ENCODE measurements at regions of chr13 and their contacts with region 1.

Region 1: GRCh38 chr13:33846444-33847062 is 28.6 kb downstream of the RFC3 start:
- DNase-seq: no peak
- H3K4me3 ChIP-seq: no peak overlapping the region
- H3K27ac ChIP-seq: no peak overlapping the region
- H3K4me1 ChIP-seq: no peaks in the 10 kb centered on the region
- H3K27me3 ChIP-seq: no peaks in the 10 kb centered on the region
- CTCF ChIP-seq: no peak

Region 2: DNA sequence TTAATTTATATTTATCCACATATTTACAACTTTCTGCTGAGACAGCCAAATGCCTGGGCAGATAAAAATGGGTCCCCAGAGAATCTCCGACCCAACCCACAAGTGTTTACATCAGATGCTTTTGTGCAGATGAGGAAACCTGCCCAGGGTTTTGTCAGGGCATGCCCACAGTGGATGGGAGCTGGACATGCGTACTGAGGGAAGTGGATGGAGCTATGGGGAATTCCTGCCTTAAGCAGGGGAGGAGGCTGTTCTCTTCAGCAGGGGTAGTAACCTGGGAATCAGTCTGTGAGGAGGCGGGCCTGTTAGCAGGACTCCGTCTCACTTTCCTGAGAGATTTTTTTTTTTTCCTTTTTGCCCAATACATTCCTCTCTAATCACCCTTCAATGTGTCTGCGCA is 94.3 kb after region 1 on chr13:
- CTCF ChIA-PET with region 1: no interaction called
- POLR2A ChIA-PET with region 1: no interaction called
- intact Hi-C with region 1: no loop called
- DNase-seq: no peak
- H3K4me3 ChIP-seq: no peak overlapping the region
- H3K27ac ChIP-seq: no peak overlapping the region
- H3K4me1 ChIP-seq: no peaks in the 10 kb centered on the region
- H3K27me3 ChIP-seq: no peaks in the 10 kb centered on the region
- CTCF ChIP-seq: no peak

Region 3: DNA sequence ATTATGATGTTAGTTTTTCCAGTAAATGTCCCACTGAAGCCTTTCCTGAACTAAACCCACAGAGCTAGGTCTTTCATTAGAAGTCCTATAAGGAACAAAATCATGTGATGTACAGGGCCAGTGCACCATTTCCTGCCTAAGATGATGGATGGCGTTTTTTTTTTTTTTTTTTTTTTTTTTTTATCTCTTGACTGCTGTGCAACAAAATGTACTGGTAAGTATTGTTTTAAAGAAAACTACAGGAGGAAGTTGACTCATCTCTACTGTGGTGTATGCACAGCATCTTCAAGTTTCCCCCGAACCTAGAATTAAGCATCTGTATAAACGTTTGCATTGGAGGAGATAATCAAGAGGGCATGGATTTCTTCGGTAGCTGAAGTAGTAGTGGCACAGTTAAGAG is 1293.0 kb after region 1 on chr13:
- CTCF ChIA-PET with region 1: no interaction called
- POLR2A ChIA-PET with region 1: interaction called, 43 read pairs
- intact Hi-C with region 1: no loop called
- DNase-seq: no peak
- H3K4me3 ChIP-seq: no peak overlapping the region
- H3K27ac ChIP-seq: no peak overlapping the region
- H3K4me1 ChIP-seq: no peaks in the 10 kb centered on the region
- H3K27me3 ChIP-seq: no peaks in the 10 kb centered on the region
- CTCF ChIP-seq: no peak